IMR-90 (cell line): ENCODE measurements at regions of chr16 and their contacts with region 1.

Region 1: GRCh38 chr16:84175350-84176081 is 11.3 kb downstream of the TAF1C start:
- DNase-seq: peak; percentile 53
- ATAC-seq: peak; percentile 69
- H3K4me3 ChIP-seq: no peak overlapping the region
- H3K27ac ChIP-seq: no peak overlapping the region
- H3K4me1 ChIP-seq: peaks cover 15% of the 10 kb centered on the region
- H3K27me3 ChIP-seq: no peaks in the 10 kb centered on the region
- CTCF ChIP-seq: peak; percentile 76
- POLR2A ChIP-seq: no peak
- RAD21 ChIP-seq: peak; percentile 84

Region 2: DNA sequence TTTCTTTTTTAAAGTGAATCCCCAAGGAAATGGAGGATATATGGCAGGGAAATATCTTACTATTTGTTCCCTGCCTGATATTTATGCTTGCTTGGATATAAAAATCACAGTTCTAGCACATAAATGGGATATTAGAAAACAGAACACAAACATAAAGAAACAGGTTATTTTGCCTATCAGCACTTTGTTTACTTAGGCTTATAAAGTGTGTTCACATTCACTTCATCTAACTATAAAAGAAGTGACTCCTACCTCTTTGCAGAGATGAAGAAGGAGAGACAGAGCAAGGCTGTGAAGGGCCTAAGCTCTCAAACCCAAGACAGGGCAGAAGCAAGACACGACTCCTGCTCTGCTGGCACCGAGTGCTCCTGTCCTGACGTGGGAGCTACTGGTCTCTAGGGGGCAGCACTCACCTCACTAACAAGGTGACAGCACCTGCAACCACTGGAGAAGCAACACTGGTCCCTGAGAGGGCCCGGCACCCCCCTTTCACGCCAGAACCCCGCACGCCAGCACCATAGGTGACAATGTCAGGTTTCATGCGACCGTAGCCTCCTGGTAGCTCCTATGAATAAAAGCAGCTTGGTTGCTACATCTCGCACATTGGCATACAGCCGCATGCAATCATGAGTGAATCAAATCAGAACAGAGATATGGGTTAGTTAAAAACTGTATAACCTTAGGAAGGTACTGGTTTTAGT is 90.8 kb before region 1 on chr16:
- CTCF ChIA-PET with region 1: interaction called, 3 read pairs
- POLR2A ChIA-PET with region 1: no interaction called
- dilution Hi-C with region 1: no loop called
- in situ Hi-C with region 1: loop called (anchors 5 kb)
- intact Hi-C with region 1: no loop called
- DNase-seq: peak; percentile 65
- ATAC-seq: peak; percentile 84
- H3K4me3 ChIP-seq: no peak overlapping the region
- H3K27ac ChIP-seq: no peak overlapping the region
- H3K4me1 ChIP-seq: no peaks in the 10 kb centered on the region
- H3K27me3 ChIP-seq: no peaks in the 10 kb centered on the region
- CTCF ChIP-seq: peak; percentile 64
- POLR2A ChIP-seq: no peak
- RAD21 ChIP-seq: peak; percentile 68

Region 3: GRCh38 chr16:84116720-84117493 is 58.6 kb before region 1 on chr16 and contains the start of gene MBTPS1:
- CTCF ChIA-PET with region 1: interaction called, 4 read pairs
- POLR2A ChIA-PET with region 1: no interaction called
- dilution Hi-C with region 1: no loop called
- in situ Hi-C with region 1: no loop called
- intact Hi-C with region 1: loop called (anchors 5 kb)
- DNase-seq: peak; percentile 97
- ATAC-seq: peak; percentile 96
- H3K4me3 ChIP-seq: peak within 1 kb of the TSS; percentile 85
- H3K27ac ChIP-seq: peak within 1 kb of the TSS; percentile 95
- H3K4me1 ChIP-seq: no peaks in the 10 kb centered on the region
- H3K27me3 ChIP-seq: no peaks in the 10 kb centered on the region
- CTCF ChIP-seq: no peak
- POLR2A ChIP-seq: peak; percentile 83
- RAD21 ChIP-seq: no peak
- total RNA-seq, gene MBTPS1: 70.3 and 70.4 TPM in 2 replicates

Region 4: GRCh38 chr16:84186685-84187437 is 11.3 kb after region 1 on chr16 and contains the start of gene TAF1C:
- CTCF ChIA-PET with region 1: interaction called, 24 read pairs
- POLR2A ChIA-PET with region 1: interaction called, 5 read pairs
- dilution Hi-C with region 1: no loop called
- in situ Hi-C with region 1: no loop called
- intact Hi-C with region 1: no loop called
- DNase-seq: peak; percentile 93
- ATAC-seq: peak; percentile 97
- H3K4me3 ChIP-seq: peak within 1 kb of the TSS; percentile 88
- H3K27ac ChIP-seq: peak within 1 kb of the TSS; percentile 94
- H3K4me1 ChIP-seq: peaks cover 3% of the 10 kb centered on the region
- H3K27me3 ChIP-seq: no peaks in the 10 kb centered on the region; the same call in 1 of the 2 replicates
- CTCF ChIP-seq: peak; percentile 99
- POLR2A ChIP-seq: no peak
- RAD21 ChIP-seq: peak; percentile 83
- total RNA-seq, gene TAF1C: 6.1 and 7.3 TPM in 2 replicates

Region 5: GRCh38 chr16:84209989-84210388 is 34.5 kb after region 1 on chr16:
- CTCF ChIA-PET with region 1: no interaction called
- POLR2A ChIA-PET with region 1: no interaction called
- dilution Hi-C with region 1: no loop called
- in situ Hi-C with region 1: no loop called
- intact Hi-C with region 1: no loop called
- DNase-seq: peak; percentile 15
- ATAC-seq: peak; percentile 53; the same call in 1 of the 2 replicates
- H3K4me3 ChIP-seq: no peak overlapping the region
- H3K27ac ChIP-seq: no peak overlapping the region
- H3K4me1 ChIP-seq: no peaks in the 10 kb centered on the region
- H3K27me3 ChIP-seq: peaks cover 38% of the 10 kb centered on the region
- CTCF ChIP-seq: no peak
- POLR2A ChIP-seq: no peak
- RAD21 ChIP-seq: no peak

Region 6: DNA sequence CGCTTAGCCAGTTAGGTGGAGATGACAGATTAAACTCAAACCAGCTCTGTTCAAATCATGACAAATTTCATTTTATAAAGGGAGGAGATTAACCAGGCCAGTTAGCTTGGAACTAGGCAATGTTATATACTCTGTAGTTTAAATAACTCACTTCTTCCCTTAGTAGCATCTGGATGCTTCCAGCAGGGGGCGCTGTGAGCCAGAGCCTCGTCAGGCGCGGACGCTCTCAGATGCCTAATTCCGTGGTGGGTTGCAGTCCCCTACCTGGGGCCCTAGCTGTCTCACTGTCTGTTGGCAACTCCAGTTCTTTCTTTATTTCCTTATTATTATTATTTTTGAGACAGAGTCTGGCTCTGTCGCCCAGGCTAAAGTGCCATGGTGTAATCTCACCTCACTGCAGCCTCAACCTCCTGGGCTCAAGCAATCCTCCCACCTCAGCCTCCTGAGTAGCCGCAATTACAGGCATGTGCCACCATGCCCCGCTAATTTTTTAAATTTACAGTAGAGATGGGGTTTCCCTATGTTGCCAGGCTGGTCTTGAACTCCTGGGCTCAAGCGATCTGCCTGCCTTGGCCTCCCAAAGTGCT is 101.8 kb after region 1 on chr16:
- CTCF ChIA-PET with region 1: no interaction called
- POLR2A ChIA-PET with region 1: no interaction called
- dilution Hi-C with region 1: no loop called
- in situ Hi-C with region 1: no loop called
- intact Hi-C with region 1: no loop called
- DNase-seq: peak; percentile 33
- ATAC-seq: peak; percentile 94
- H3K4me3 ChIP-seq: no peak overlapping the region
- H3K27ac ChIP-seq: no peak overlapping the region
- H3K4me1 ChIP-seq: no peaks in the 10 kb centered on the region
- H3K27me3 ChIP-seq: peaks cover 14% of the 10 kb centered on the region
- CTCF ChIP-seq: peak; percentile 82
- POLR2A ChIP-seq: no peak
- RAD21 ChIP-seq: peak; percentile 83

Region 7: GRCh38 chr16:84349862-84350624 is 174.5 kb after region 1 on chr16:
- CTCF ChIA-PET with region 1: no interaction called
- POLR2A ChIA-PET with region 1: no interaction called
- dilution Hi-C with region 1: no loop called
- in situ Hi-C with region 1: no loop called
- intact Hi-C with region 1: no loop called
- DNase-seq: no peak
- ATAC-seq: no peak
- H3K4me3 ChIP-seq: no peak overlapping the region
- H3K27ac ChIP-seq: no peak overlapping the region
- H3K4me1 ChIP-seq: no peaks in the 10 kb centered on the region
- H3K27me3 ChIP-seq: peaks cover 62% of the 10 kb centered on the region
- CTCF ChIP-seq: no peak
- POLR2A ChIP-seq: no peak
- RAD21 ChIP-seq: no peak

Region 8: DNA sequence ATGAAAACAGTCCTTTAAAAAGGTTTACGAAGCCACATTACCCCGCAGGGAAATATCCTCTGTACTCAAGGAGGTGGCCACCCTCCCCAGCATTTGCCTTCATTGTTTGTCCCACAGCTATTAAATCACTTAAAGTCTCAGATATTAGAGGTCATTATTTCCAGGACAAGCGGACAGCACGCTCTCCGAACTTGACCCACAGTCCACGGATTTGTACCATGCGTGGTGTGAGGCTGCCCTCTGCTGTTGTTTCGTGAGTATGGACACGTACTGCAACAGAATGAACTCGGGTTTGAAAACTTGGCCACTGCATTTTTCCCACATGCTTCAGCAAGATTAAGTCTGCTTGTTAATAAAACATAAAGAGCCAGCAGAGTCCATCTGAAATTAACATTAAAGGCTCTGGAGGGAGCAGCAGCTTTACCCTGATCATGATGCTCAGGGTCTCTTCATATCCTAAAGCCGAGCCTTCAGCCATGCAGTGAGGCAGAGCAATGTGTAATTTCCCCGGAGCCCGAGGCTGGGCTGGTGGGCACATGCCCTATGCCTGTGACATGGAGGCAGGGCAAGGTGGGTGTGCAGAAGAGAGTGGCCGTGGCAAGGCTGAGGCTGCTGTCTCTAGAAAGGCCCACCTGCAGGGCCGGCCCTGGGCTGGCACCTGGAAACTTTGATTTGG is 309.2 kb after region 1 on chr16:
- CTCF ChIA-PET with region 1: no interaction called
- POLR2A ChIA-PET with region 1: no interaction called
- dilution Hi-C with region 1: no loop called
- in situ Hi-C with region 1: no loop called
- intact Hi-C with region 1: loop called (anchors 2 kb)
- DNase-seq: peak; percentile 74
- ATAC-seq: peak; percentile 94
- H3K4me3 ChIP-seq: no peak overlapping the region
- H3K27ac ChIP-seq: no peak overlapping the region
- H3K4me1 ChIP-seq: no peaks in the 10 kb centered on the region; the same call in 1 of the 2 replicates
- H3K27me3 ChIP-seq: no peaks in the 10 kb centered on the region
- CTCF ChIP-seq: peak; percentile 84
- POLR2A ChIP-seq: no peak
- RAD21 ChIP-seq: peak; percentile 95